Left ventricle myocardium inferior (tissue), 1 donor: ENCODE measurements at regions of chr1 and their contacts with region 1.

Region 1: DNA sequence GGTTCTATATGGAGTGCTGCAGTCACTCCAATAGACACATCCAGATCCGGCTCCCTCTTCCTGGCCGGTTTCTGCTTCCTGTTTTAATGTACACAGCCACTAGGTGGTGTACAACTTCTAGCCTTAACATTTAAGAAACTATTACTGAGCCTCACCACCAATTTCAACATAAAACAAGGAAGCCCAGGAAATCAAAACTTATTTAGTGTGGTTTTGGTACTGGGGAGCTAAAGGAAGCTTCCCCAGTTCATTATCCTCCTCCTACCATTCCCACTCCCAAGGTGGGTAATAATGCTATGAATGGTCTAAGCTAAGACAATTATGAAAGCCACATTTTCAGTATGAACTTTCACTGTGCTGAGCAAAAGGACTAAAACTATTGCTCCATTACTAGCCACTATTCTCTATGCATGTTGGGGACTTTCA is 25.5 kb upstream of the MTMR11 start:
- DNase-seq: no peak
- H3K4me3 ChIP-seq: no peak overlapping the region
- H3K27ac ChIP-seq: peak overlapping the region; percentile 69
- H3K4me1 ChIP-seq: peaks cover 27% of the 10 kb centered on the region
- H3K27me3 ChIP-seq: no peaks in the 10 kb centered on the region
- CTCF ChIP-seq: peak; percentile 87

Region 2: DNA sequence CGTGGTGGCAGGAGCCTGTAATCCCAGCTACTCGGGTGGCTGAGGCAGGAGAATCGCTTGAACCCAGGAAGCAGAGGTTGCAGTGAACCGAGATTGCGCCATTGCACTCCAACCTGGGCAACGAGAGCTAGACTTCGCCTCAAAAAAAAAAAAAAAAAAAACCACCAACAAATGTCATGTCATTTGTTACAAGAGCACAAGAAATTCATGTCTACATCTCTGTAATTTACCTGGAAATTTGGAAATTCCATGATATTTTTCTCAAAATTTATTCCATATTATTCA is 88.9 kb after region 1 on chr1:
- intact Hi-C with region 1: loop called (anchors 2 kb)
- DNase-seq: no peak
- H3K4me3 ChIP-seq: no peak overlapping the region
- H3K27ac ChIP-seq: no peak overlapping the region
- H3K4me1 ChIP-seq: peaks cover 4% of the 10 kb centered on the region
- H3K27me3 ChIP-seq: no peaks in the 10 kb centered on the region
- CTCF ChIP-seq: no peak

Region 3: GRCh38 chr1:150162862-150163706 is 200.9 kb after region 1 on chr1:
- intact Hi-C with region 1: loop called (anchors 10 kb)
- DNase-seq: peak; percentile 83
- H3K4me3 ChIP-seq: peak overlapping the region; percentile 56
- H3K27ac ChIP-seq: peak overlapping the region; percentile 91
- H3K4me1 ChIP-seq: peaks cover 45% of the 10 kb centered on the region
- H3K27me3 ChIP-seq: no peaks in the 10 kb centered on the region
- CTCF ChIP-seq: no peak